Dorsolateral prefrontal cortex (tissue), 120 donors: ENCODE measurements at regions of chr4 and their contacts with region 1.

Region 1: DNA sequence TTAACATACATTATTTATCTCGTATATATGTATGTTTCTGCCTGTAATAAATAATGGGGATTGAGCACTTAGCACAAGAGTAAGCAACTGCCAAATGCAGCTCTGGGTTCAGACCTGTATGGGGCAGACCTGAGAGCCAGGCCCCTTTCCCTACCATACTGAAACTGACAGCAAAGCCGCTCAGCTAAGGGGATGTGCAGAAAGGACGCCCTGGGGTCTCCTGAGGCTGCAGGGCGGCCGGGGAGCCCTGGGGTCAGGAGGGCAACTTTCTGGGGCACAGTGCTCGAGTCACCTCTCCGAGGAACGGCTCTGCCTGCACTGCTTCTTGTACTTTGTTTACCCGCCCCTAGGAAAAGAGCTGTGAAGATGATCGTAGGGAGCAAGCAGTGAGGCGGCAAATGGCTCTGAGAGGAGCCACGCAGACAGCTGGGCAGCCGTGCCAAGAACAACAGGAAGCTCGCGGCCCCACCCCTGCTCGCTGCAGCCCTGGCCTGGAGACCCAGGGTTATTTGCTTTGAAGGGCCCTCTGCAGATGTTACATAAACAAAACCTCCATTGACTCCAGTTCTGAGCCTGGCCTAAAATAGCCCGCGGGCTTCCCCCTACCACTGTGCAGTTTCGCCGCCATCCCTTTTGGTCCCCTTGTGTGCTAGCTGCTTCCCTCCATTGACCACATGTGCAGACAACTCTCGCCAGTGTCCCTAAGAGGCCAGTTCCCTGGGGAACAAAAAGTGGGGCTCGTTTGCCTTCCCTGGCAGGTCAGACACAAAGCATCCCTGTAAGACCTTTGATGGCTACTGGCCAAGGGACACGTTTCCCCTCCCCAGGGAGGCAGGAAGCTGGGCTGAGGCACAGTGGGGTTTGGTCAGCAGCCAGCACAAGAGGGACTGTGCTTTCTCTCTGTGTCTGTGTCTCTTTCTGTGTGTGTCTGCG is 111.3 kb upstream of the LNX1 start:
- DNase-seq: peak in 9 of 10 donors; percentile 19 to 62 (median 50)
- H3K4me3 ChIP-seq: peak overlapping the region in 58 of 59 donors; percentile 1 to 72 (median 46)
- H3K27ac ChIP-seq: peak overlapping the region in 30 of 59 donors; percentile 4 to 71 (median 51)
- H3K27me3 ChIP-seq: peaks cover 0 to 3% (median 0%) of the 10 kb centered on the region in 45 donors
- CTCF ChIP-seq: peak in 4 of 56 donors; percentile 6 to 31 (median 18)

Region 2: DNA sequence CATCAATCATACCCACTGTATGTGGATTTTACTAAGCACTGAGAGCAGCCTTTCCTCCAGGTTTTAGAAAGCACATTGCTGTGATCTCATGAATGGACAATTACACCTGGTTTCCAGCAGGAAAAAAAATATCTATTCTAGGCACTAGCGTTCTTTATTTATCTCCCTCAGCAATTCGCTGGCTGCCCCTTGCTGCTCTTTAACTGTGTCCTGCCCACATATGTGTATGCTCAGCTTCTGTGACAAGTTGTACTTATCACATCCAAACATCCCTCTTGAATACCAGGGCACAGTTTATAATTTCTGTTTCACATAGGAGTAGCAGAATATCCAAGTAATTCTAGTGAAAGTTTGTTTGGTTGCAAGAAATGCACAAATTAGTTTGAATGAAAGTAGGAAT is 1190.3 kb before region 1 on chr4:
- intact Hi-C with region 1: no loop called
- DNase-seq: no peak
- H3K4me3 ChIP-seq: no peak overlapping the region
- H3K27ac ChIP-seq: no peak overlapping the region
- H3K27me3 ChIP-seq: no peaks in the 10 kb centered on the region
- CTCF ChIP-seq: no peak

Region 3: DNA sequence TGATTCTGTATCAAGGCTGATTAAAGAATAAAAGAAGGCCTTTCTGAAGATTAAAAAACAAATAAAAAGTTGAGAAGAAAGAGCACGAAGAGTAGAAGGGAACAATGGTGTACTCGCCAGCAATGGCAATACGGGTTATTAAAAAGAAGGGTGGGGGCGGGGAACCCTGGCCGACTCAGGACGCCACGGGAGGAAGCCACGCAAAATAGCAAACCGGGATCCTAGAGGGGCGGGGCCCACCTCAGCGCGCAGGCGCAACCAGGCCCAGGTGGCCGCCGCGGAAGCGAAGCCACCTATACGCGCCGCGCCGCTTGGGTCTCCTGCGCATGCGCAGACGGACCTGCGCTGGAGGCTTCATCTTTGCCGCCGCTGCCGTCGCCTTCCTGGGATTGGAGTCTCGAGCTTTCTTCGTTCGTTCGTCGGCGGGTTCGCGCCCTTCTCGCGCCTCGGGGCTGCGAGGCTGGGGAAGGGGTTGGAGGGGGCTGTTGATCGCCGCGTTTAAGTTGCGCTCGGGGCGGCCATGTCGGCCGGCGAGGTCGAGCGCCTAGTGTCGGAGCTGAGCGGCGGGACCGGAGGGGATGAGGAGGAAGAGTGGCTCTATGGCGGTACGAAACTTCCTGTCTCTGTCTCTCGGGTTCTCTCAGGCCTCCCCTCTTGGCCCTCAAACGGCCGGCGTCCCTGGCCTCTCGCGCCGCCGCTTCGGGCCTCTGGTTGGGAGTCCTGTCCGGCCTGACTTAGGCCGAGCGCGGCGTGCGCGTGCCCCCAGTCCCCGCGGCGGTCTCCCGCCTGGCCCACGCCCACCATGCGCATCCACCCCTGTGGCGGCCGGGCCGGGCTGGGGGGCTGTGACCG is 325.1 kb before region 1 on chr4 and contains the start of gene FIP1L1:
- intact Hi-C with region 1: loop called in 1 of 2 experiments (anchors 10 kb)
- DNase-seq: peak; percentile 85 to 93 (median 89)
- H3K4me3 ChIP-seq: peak within 1 kb of the TSS; percentile 60 to 99 (median 90)
- H3K27ac ChIP-seq: peak within 1 kb of the TSS in 57 of 59 donors; percentile 30 to 93 (median 80)
- H3K27me3 ChIP-seq: peaks cover 0 to 2% (median 0%) of the 10 kb centered on the region in 45 donors
- CTCF ChIP-seq: peak in 35 of 56 donors; percentile 9 to 50 (median 32)
- total RNA-seq, gene FIP1L1: 48.3 to 86.9 (median 66.4) TPM

Region 4: DNA sequence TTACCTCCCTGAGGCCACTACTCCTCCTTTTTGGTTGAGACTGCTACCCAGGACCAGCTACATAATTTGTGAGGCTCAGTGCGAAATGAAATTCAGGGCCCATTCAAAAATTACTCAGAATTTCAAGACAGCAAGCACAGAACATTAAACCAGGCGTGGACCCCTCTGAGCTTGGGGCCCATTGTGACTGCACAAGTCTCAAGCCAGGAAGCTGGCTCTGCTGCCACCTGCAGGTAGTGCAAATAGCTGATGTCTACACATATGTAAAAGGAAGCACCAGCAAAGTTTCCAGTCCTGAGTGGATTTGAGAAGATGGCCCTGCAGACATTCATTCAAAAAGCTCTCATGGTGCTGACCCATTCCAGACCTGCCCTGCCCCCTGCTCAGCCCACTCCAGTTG is 102.1 kb after region 1 on chr4:
- intact Hi-C with region 1: loop called in 1 of 2 experiments (anchors 5 kb)
- DNase-seq: peak in 4 of 10 donors; percentile 23 to 59 (median 36)
- H3K4me3 ChIP-seq: no peak overlapping the region
- H3K27ac ChIP-seq: no peak overlapping the region
- H3K27me3 ChIP-seq: peaks cover 0 to 3% (median 0%) of the 10 kb centered on the region in 45 donors
- CTCF ChIP-seq: peak in 48 of 56 donors; percentile 10 to 64 (median 36)

Region 5: GRCh38 chr4:54091637-54092404 is 389.2 kb after region 1 on chr4:
- intact Hi-C with region 1: no loop called
- DNase-seq: peak; percentile 50 to 86 (median 74)
- H3K4me3 ChIP-seq: peak overlapping the region; percentile 36 to 73 (median 57)
- H3K27ac ChIP-seq: peak overlapping the region in 22 of 59 donors; percentile 10 to 55 (median 32)
- H3K27me3 ChIP-seq: peaks cover 0 to 91% (median 37%) of the 10 kb centered on the region in 45 donors
- CTCF ChIP-seq: no peak

Region 6: GRCh38 chr4:54217642-54218495 is 515.3 kb after region 1 on chr4:
- intact Hi-C with region 1: loop called in 1 of 2 experiments (anchors 5 kb)
- DNase-seq: peak in 8 of 10 donors; percentile 42 to 77 (median 62)
- H3K4me3 ChIP-seq: peak overlapping the region; percentile 26 to 73 (median 55)
- H3K27ac ChIP-seq: peak overlapping the region in 3 of 59 donors; percentile 4 to 23 (median 11)
- H3K27me3 ChIP-seq: peaks cover 0 to 41% (median 0%) of the 10 kb centered on the region in 45 donors
- CTCF ChIP-seq: peak; percentile 83 to 97 (median 92)